ENCODE measurements at regions of chr4 and their contacts with region 1.

Region 1: DNA sequence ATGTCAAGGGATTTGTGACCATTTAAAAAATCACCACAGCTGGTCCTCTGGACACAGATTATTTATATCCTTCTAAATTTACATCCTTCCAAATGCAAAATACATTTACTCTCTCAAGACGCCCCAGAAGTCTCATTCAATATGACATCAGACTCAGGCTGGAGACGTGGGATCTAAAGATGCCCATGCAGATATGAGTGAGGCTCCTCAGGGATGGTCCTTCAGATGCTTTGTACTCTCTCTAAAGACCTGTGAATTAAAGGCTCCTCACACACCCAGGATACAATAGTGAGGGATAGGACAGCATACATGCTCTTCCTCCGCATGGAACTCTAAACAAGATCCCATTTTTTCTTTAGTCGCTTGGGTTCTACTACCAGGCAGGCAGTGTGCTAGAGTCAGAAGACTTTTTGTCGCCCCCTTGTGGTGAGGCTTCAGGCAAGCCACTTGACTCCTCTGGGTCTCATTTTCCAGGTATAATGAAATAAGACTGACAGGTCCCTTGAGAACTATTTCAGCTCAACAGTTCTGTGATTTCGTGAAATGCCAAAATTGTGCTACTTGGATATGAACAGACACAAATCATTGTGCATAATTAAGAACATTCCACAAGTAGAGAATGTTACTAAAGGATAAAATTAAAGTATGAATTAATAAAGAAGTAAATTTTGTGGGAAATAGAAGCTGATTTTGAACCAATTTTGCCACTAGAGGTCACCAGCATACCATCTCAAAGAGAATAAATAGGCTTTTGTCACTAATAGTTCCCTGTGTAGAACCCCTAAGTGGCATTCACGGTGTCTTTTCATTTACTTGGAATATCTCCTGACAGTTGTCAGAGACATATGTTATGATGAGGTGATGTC is 13.7 kb upstream of the SCOC start:
- DNase-seq: peak; percentile 71
- H3K4me3 ChIP-seq: no peak overlapping the region
- H3K27ac ChIP-seq: no peak overlapping the region
- H3K4me1 ChIP-seq: no peaks in the 10 kb centered on the region
- H3K27me3 ChIP-seq: peaks cover 3% of the 10 kb centered on the region
- CTCF ChIP-seq: peak; percentile 78 to 82

Region 2: DNA sequence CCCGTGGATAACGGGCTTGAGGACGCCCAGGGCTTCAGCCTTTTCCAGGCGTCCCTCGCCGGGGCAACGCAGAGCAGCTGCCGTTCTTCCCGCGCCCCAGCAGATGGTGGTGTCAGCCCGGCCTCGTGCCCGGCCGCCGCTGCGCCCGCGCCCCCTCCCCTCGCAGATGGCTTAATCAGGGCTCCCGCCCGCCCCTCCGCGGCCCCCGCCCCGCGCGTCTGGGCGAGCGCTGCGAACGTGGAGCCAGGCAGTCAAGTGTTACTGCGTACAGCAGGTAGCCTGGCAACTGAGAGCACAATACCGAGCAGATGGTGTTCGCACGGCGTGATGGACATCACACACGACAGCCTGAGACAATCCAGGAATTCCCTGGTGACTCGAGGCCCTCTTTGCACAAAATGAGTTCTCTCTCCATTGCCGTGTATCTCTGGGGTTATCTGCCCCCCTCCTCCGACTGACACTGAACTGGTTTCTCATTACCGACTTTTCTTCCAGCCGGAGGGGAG is 624.9 kb before region 1 on chr4:
- CTCF ChIA-PET with region 1: interaction called, 4 read pairs
- dilution Hi-C with region 1: no loop called
- in situ Hi-C with region 1: no loop called
- intact Hi-C with region 1: loop called (anchors 1 kb)
- DNase-seq: peak; percentile 64
- H3K4me3 ChIP-seq: peak overlapping the region; percentile 35 to 36 (median 35)
- H3K27ac ChIP-seq: no peak overlapping the region
- H3K4me1 ChIP-seq: peaks cover 9% of the 10 kb centered on the region
- H3K27me3 ChIP-seq: peaks cover 12% of the 10 kb centered on the region
- CTCF ChIP-seq: peak; percentile 22 to 67

Region 3: DNA sequence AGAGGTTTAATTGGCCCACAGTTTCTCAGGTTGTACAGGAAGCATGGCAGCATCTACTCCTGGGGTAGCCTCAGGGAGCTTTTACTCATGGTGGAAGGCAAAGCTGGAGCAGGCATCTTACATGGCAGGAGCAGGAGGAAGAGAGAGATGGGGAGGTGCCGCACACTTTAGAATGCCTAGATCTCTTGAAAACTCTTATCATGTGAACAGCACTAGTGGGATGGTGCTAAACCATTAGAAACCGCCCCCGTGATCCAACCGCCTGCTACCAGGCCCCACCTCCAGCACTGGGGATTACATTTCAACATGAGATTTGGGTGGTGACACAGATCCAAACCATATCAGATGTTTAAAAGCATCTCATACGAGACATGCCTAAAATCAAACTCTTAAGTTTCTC is 27.9 kb before region 1 on chr4:
- CTCF ChIA-PET with region 1: interaction called, 5 read pairs
- dilution Hi-C with region 1: no loop called
- in situ Hi-C with region 1: no loop called
- intact Hi-C with region 1: loop called (anchors 2 kb)
- DNase-seq: no peak
- H3K4me3 ChIP-seq: no peak overlapping the region
- H3K27ac ChIP-seq: no peak overlapping the region
- H3K4me1 ChIP-seq: no peaks in the 10 kb centered on the region
- H3K27me3 ChIP-seq: no peaks in the 10 kb centered on the region
- CTCF ChIP-seq: no peak

Region 4: GRCh38 chr4:140344101-140344500 is 15.7 kb before region 1 on chr4:
- CTCF ChIA-PET with region 1: no interaction called
- dilution Hi-C with region 1: no loop called
- in situ Hi-C with region 1: no loop called
- intact Hi-C with region 1: no loop called
- DNase-seq: no peak
- H3K4me3 ChIP-seq: no peak overlapping the region
- H3K27ac ChIP-seq: no peak overlapping the region
- H3K4me1 ChIP-seq: peaks cover 4% of the 10 kb centered on the region
- H3K27me3 ChIP-seq: peaks cover 3% of the 10 kb centered on the region
- CTCF ChIP-seq: no peak

Region 5: GRCh38 chr4:140497747-140498636 is 138.2 kb after region 1 on chr4 and contains the start of gene MGAT4D:
- CTCF ChIA-PET with region 1: no interaction called
- dilution Hi-C with region 1: no loop called
- in situ Hi-C with region 1: no loop called
- intact Hi-C with region 1: no loop called
- DNase-seq: no peak
- H3K4me3 ChIP-seq: no peak within 1 kb of the TSS
- H3K27ac ChIP-seq: no peak within 1 kb of the TSS
- H3K4me1 ChIP-seq: no peaks in the 10 kb centered on the region
- H3K27me3 ChIP-seq: peaks cover 28% of the 10 kb centered on the region
- CTCF ChIP-seq: no peak
- total RNA-seq, gene MGAT4D: not detected

Region 6: DNA sequence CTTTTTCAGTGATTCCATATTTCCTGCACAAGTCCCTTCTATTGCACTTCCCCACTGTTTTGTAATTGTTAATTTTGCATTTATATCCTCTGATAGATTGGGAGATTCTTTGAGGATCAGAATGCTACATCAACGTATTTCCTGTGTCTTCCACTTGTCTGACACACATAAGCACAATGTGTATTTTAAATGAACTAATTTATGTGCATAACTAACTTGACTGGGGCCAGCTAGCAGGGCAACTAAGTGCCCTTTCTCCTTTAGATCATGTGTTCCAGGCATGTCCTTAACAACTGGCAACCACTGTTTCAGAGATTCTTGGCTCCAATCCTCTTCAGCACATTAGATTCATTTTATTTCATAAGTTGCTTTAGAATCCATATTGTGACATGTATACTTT is 224.6 kb after region 1 on chr4:
- CTCF ChIA-PET with region 1: no interaction called
- dilution Hi-C with region 1: no loop called
- in situ Hi-C with region 1: no loop called
- intact Hi-C with region 1: no loop called
- DNase-seq: no peak
- H3K4me3 ChIP-seq: no peak overlapping the region
- H3K27ac ChIP-seq: no peak overlapping the region
- H3K4me1 ChIP-seq: peaks cover under 1% of the 10 kb centered on the region
- H3K27me3 ChIP-seq: peaks cover 17% of the 10 kb centered on the region
- CTCF ChIP-seq: no peak

Region 7: GRCh38 chr4:140609548-140610425 is 250.0 kb after region 1 on chr4:
- CTCF ChIA-PET with region 1: interaction called, 5 read pairs
- dilution Hi-C with region 1: no loop called
- in situ Hi-C with region 1: loop called (anchors 10 to 25 kb)
- intact Hi-C with region 1: loop called (anchors 1 kb)
- DNase-seq: peak; percentile 45
- H3K4me3 ChIP-seq: no peak overlapping the region
- H3K27ac ChIP-seq: no peak overlapping the region
- H3K4me1 ChIP-seq: no peaks in the 10 kb centered on the region
- H3K27me3 ChIP-seq: peaks cover 2% of the 10 kb centered on the region
- CTCF ChIP-seq: peak; percentile 47 to 56

Region 8: DNA sequence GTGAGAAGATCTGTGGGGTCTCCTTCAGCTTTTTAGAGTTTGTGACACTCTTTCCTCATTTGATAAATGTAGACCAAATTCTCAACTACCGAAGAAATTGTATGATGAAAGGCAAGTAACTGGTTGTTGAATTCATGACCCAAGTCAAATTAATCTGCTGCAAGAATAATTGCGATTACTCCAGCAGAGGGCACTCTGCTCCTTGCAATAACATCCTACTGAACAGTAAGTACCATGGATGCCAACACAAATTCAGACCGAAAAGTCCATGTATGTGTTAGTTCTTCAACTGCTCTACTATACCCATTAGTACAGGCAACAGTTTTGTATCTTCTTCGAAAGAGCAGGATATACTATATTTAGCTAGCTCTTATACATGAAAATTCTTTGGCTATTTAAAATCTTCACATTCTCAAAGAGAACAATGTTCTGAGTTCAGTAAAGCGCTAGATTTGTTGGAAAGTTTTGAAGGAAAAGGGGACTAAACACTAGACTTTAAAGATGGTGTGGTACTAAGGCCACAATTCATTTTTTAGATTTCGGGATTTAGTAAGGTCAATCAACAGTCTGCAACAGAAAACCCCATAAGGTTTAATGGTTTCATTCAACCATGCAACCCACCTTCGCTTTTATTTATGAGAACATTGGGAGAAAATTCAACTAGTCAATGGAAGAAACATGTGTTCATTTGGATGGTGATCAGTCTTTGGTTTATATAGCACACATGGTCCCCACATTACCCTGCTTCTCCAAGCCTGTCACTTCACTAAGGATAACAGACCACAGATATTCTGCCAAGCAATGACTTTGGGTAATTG is 501.8 kb after region 1 on chr4:
- CTCF ChIA-PET with region 1: no interaction called
- dilution Hi-C with region 1: no loop called
- in situ Hi-C with region 1: loop called in 1 of 2 experiments (anchors 25 kb)
- intact Hi-C with region 1: no loop called
- DNase-seq: peak; percentile 56
- H3K4me3 ChIP-seq: no peak overlapping the region
- H3K27ac ChIP-seq: no peak overlapping the region
- H3K4me1 ChIP-seq: peaks cover 25% of the 10 kb centered on the region
- H3K27me3 ChIP-seq: peaks cover 3% of the 10 kb centered on the region
- CTCF ChIP-seq: peak; percentile 75 to 76

Measured in mammary epithelial cell (primary cell).